Heart right ventricle (tissue), 16 donors: ENCODE measurements at regions of chr6 and their contacts with region 1.

Region 1: DNA sequence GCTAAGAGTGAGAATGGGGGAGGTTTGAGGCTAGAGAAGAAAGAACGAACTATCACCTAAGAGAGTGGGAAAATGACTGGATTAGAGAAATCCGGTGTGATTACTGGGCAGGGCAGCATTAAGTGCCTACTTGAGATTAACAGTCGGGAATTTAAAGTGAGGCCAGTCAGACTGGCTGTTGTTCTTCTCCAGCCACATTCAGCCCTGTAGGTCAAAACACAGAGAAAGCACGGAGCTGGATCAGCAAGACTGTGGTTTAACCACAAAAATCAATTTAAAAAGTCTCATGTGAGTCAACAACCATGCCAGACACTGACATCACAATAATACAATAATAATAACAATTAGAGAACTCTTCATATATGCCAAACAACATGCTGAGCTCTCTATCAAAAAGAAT is 301.9 kb upstream of the SGK1 start:
- DNase-seq: no peak
- ATAC-seq: peak; percentile 55 to 90 (median 77)
- H3K4me3 ChIP-seq: no peak overlapping the region
- H3K27ac ChIP-seq: no peak overlapping the region
- H3K4me1 ChIP-seq: peaks cover 0 to 8% (median 0%) of the 10 kb centered on the region in 9 donors
- H3K27me3 ChIP-seq: no peaks in the 10 kb centered on the region
- CTCF ChIP-seq: no peak

Region 2: GRCh38 chr6:134529921-134530320 is 89.9 kb before region 1 on chr6:
- intact Hi-C with region 1: loop called in 1 of 10 experiments (anchors 10 kb)
- DNase-seq: no peak
- ATAC-seq: no peak
- H3K4me3 ChIP-seq: no peak overlapping the region
- H3K27ac ChIP-seq: no peak overlapping the region
- H3K4me1 ChIP-seq: peaks cover 0 to 44% (median 21%) of the 10 kb centered on the region in 9 donors
- H3K27me3 ChIP-seq: no peaks in the 10 kb centered on the region
- CTCF ChIP-seq: no peak

Region 3: DNA sequence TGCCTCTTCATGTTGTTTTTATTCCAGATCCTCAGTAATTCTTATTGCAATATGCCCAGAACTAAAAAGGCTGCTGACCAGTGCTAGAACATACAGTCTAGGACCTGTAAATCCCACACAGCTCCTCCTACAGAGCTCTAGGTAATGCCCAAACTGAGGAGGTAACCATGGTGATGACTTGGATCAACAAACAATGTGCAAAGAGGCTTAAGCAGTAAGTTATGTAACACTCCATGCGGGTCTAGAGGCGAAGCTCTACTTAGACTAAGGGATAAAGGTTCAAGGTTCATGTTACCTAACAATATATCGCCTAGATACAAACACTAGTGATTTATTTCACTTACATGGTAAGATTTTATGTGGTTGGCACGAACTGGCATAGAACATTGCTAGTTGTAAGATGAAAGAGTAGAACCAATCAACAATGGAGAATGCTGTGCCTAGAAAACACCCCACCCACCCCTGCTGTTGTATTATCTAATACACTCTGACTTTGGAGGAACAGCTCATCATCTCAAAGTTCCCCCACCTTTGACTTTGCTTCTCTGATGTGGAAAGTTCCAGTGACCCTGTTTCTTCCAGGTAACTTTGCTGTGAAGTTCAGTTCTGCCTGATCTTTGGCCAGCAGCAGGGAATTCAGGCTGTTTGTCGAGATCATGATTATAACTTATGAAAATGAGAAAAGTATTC is 87.7 kb after region 1 on chr6:
- intact Hi-C with region 1: no loop called
- DNase-seq: no peak
- ATAC-seq: peak in 1 of 8 donors; percentile 29
- H3K4me3 ChIP-seq: no peak overlapping the region
- H3K27ac ChIP-seq: no peak overlapping the region
- H3K4me1 ChIP-seq: no peaks in the 10 kb centered on the region
- H3K27me3 ChIP-seq: no peaks in the 10 kb centered on the region
- CTCF ChIP-seq: no peak

Region 4: GRCh38 chr6:135640449-135641111 is 1020.8 kb after region 1 on chr6:
- intact Hi-C with region 1: no loop called
- DNase-seq: no peak
- ATAC-seq: no peak
- H3K4me3 ChIP-seq: no peak overlapping the region
- H3K27ac ChIP-seq: no peak overlapping the region
- H3K4me1 ChIP-seq: no peaks in the 10 kb centered on the region
- H3K27me3 ChIP-seq: no peaks in the 10 kb centered on the region
- CTCF ChIP-seq: no peak